Adrenal gland (tissue), 19 donors: ENCODE measurements at regions of chr7 and their contacts with region 1.

Region 1: GRCh38 chr7:101138213-101138870 is 11.4 kb downstream of the SERPINE1 start:
- DNase-seq: peak; percentile 88 to 96 (median 95)
- H3K4me3 ChIP-seq: peak overlapping the region in 1 of 4 donors; percentile 31
- H3K27ac ChIP-seq: peak overlapping the region; percentile 27 to 89 (median 53)
- H3K4me1 ChIP-seq: peaks cover 0 to 15% of the 10 kb centered on the region in 2 donors
- H3K27me3 ChIP-seq: no peaks in the 10 kb centered on the region
- CTCF ChIP-seq: peak; percentile 77 to 98 (median 84)
- POLR2A ChIP-seq: peak in 1 of 2 donors; percentile 25

Region 2: GRCh38 chr7:101087324-101088068 is 50.8 kb before region 1 on chr7:
- intact Hi-C with region 1: loop called in 1 of 2 experiments (anchors 2 kb)
- DNase-seq: no peak
- H3K4me3 ChIP-seq: no peak overlapping the region
- H3K27ac ChIP-seq: no peak overlapping the region
- H3K4me1 ChIP-seq: peaks cover 11 to 21% of the 10 kb centered on the region in 2 donors
- H3K27me3 ChIP-seq: no peaks in the 10 kb centered on the region
- CTCF ChIP-seq: no peak
- POLR2A ChIP-seq: no peak

Region 3: GRCh38 chr7:101099969-101100781 is 38.2 kb before region 1 on chr7:
- intact Hi-C with region 1: loop called (anchors 5 kb)
- DNase-seq: peak; percentile 94 to 99 (median 98)
- H3K4me3 ChIP-seq: no peak overlapping the region
- H3K27ac ChIP-seq: peak overlapping the region; percentile 46 to 92 (median 81)
- H3K4me1 ChIP-seq: peaks cover 10 to 17% of the 10 kb centered on the region in 2 donors
- H3K27me3 ChIP-seq: no peaks in the 10 kb centered on the region
- CTCF ChIP-seq: no peak
- POLR2A ChIP-seq: peak in 1 of 2 donors; percentile 65

Region 4: DNA sequence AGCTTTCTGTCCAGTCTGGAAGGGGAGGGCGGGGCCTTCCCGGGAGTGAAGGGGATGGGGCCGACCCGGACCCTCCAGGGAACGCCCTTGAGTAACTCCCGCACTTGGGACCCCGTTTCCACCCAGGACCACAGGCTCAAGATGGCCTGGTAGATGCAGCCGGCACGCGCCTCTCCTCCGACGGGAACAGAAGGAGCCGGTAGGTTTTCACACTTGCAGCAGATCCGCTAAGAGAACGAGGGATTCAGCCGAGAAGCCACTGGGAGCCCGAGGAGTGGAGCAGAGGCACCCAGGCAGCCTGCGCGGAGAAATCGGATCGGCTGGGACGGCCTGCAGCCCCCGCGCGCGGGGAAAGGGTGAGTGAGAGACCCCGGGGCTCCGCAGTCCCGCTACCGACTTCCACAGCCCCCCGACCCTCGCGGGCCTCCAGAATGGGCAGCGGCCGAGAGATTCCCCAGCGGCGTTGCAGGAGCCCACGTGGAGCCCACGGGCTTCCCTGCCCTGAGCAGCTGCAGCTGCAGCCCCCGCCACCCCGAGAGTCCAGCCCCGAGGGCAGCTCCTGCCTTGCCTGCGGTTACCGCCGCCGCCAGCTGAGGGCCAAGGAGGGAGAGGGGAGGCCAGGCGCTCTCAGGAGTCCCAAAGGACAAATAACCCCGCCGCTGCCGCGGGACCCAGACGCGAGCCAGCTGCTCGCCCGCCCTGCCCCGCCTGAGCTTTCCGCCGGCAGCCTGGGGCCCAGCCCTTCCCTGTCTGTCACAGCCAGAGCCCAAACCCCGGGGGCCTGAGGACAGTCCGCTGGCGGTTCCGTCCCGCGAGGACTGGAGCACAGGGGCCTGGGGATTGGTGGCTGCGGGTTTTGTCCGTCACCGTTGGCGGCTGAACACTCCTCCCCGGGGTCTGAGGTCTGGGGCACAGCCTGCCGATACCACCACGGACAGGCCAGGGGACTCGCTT is 161.4 kb after region 1 on chr7:
- intact Hi-C with region 1: loop called in 1 of 2 experiments (anchors 10 kb)
- DNase-seq: no peak
- H3K4me3 ChIP-seq: no peak overlapping the region
- H3K27ac ChIP-seq: no peak overlapping the region
- H3K4me1 ChIP-seq: no peaks in the 10 kb centered on the region
- H3K27me3 ChIP-seq: peaks cover 66% of the 10 kb centered on the region
- CTCF ChIP-seq: no peak
- POLR2A ChIP-seq: no peak